PC-3 (cell line): ENCODE measurements at regions of chr14 and their contacts with region 1.

Region 1: DNA sequence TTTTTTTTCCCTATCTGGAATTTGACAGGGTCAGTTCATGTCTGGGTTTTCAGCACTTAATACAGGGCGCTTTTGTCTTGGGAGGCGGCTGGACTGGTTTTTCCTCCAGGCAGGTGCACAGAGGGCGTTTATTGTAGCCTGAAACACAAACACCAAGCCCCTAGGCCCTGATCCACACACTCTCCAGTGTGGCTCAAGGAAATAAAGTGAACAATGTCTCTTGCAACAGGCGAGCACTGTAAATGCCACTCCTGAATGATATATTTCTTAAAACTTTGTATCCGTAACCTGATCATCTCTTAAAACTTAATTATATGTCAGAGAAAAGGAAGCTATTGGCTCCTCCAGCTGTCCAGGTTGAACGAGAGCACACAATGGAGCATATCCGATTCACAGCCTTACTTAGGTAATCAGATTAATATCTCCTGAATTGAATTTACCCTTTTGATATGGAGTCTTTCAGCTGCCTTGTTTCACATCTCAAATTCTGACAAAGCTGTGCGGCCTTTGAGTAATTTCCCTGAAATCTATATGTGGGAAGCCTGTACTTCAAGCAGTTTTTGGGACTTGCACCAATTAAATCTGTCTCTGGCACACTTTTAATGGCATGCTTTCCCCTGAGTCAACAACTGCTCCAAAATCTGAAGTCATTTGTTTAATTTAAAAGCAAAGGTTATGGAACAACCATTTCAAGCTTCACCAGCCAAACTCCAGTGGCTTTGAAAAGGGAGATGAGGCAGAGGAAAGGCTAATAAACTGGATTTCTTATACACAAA is 485.7 kb downstream of the ZFP36L1 start:
- DNase-seq: peak; percentile 84
- ATAC-seq: peak; percentile 83
- H3K4me3 ChIP-seq: peak overlapping the region; percentile 4; the same call in 1 of the 2 replicates
- H3K27ac ChIP-seq: peak overlapping the region; percentile 75
- H3K4me1 ChIP-seq: peaks cover 41% of the 10 kb centered on the region
- H3K27me3 ChIP-seq: no peaks in the 10 kb centered on the region
- CTCF ChIP-seq: no peak

Region 2: GRCh38 chr14:68255697-68256203 is 51.5 kb before region 1 on chr14:
- CTCF ChIA-PET with region 1: interaction called, 3 read pairs
- POLR2A ChIA-PET with region 1: no interaction called
- intact Hi-C with region 1: loop called (anchors 1 kb)
- DNase-seq: peak; percentile 94
- ATAC-seq: peak; percentile 98
- H3K4me3 ChIP-seq: no peak overlapping the region
- H3K27ac ChIP-seq: peak overlapping the region; percentile 29
- H3K4me1 ChIP-seq: peaks cover 33% of the 10 kb centered on the region
- H3K27me3 ChIP-seq: no peaks in the 10 kb centered on the region
- CTCF ChIP-seq: no peak

Region 3: DNA sequence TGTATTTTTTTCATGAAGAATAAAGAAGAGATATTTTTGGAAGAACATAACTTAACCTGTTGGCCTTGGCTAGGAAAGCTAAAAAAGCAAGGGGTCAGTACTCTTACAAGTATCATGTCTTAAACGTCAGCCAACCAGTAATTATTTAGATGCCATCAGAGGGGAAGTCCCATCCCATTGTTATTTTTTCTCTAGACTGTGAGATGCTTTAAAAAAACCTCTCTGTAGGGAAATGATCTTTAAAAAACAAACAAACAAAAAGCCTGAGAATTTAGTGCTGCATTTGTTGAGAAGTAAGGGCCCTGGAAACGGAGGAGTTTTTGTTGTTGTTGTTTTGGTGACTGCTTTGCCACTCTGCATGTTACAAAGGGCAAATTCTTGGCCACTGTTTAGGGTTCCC is 11.6 kb after region 1 on chr14:
- CTCF ChIA-PET with region 1: no interaction called
- POLR2A ChIA-PET with region 1: no interaction called
- intact Hi-C with region 1: no loop called
- DNase-seq: no peak
- ATAC-seq: no peak
- H3K4me3 ChIP-seq: no peak overlapping the region
- H3K27ac ChIP-seq: no peak overlapping the region
- H3K4me1 ChIP-seq: no peaks in the 10 kb centered on the region
- H3K27me3 ChIP-seq: no peaks in the 10 kb centered on the region
- CTCF ChIP-seq: no peak

Region 4: DNA sequence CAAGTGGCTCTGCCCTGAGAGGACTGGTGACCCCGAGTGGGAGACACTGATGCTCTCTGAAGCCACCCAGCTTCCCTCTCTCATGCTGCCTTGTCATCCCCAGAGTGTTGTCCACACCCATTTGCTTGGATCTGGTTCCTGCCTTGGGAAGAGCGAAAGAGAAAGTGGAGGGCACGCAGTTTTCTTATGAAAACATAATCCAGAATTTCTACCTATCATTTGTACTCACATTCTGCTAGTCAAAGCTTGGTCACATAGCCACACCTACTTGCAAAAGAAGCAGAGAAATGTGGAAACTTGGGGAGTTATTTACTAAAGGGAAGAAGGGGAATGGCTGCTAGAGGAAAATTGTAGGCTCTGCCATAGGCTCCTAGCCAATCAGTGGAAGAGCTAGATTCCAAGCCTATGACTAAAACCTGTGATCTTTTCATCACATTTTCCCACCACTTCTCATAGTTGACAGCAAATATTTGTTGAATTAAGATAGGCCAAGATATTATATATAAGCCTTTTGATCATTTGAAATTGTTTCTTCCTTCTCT is 159.4 kb after region 1 on chr14:
- CTCF ChIA-PET with region 1: no interaction called
- POLR2A ChIA-PET with region 1: no interaction called
- intact Hi-C with region 1: loop called (anchors 5 kb)
- DNase-seq: peak; percentile 96
- ATAC-seq: peak; percentile 34
- H3K4me3 ChIP-seq: no peak overlapping the region; the same call in 1 of the 2 replicates
- H3K27ac ChIP-seq: peak overlapping the region; percentile 55
- H3K4me1 ChIP-seq: peaks cover 59% of the 10 kb centered on the region
- H3K27me3 ChIP-seq: no peaks in the 10 kb centered on the region
- CTCF ChIP-seq: no peak

Region 5: GRCh38 chr14:68695326-68695768 is 388.1 kb after region 1 on chr14:
- CTCF ChIA-PET with region 1: no interaction called
- POLR2A ChIA-PET with region 1: no interaction called
- intact Hi-C with region 1: loop called (anchors 5 kb)
- DNase-seq: peak; percentile 99
- ATAC-seq: peak; percentile 95
- H3K4me3 ChIP-seq: no peak overlapping the region
- H3K27ac ChIP-seq: peak overlapping the region; percentile 90
- H3K4me1 ChIP-seq: peaks cover 28% of the 10 kb centered on the region
- H3K27me3 ChIP-seq: no peaks in the 10 kb centered on the region
- CTCF ChIP-seq: no peak

Region 6: GRCh38 chr14:68816262-68816942 is 509.2 kb after region 1 on chr14:
- CTCF ChIA-PET with region 1: no interaction called
- POLR2A ChIA-PET with region 1: no interaction called
- intact Hi-C with region 1: loop called (anchors 5 kb)
- DNase-seq: peak; percentile 92
- ATAC-seq: peak; percentile 90
- H3K4me3 ChIP-seq: peak overlapping the region; percentile 60
- H3K27ac ChIP-seq: peak overlapping the region; percentile 83
- H3K4me1 ChIP-seq: peaks cover 22% of the 10 kb centered on the region
- H3K27me3 ChIP-seq: no peaks in the 10 kb centered on the region
- CTCF ChIP-seq: peak; percentile 97